GM18951 (cell line): ENCODE measurements at regions of chr2 and their contacts with region 1.

Region 1: GRCh38 chr2:26720322-26721166 is 28.0 kb downstream of the KCNK3 start:
- POLR2A ChIP-seq: no peak

Region 2: GRCh38 chr2:25936889-25937545 is 783.5 kb before region 1 on chr2:
- in situ Hi-C with region 1: loop called (anchors 25 kb)
- POLR2A ChIP-seq: no peak

Region 3: GRCh38 chr2:26316041-26316440 is 404.5 kb before region 1 on chr2:
- in situ Hi-C with region 1: no loop called
- POLR2A ChIP-seq: no peak

Region 4: DNA sequence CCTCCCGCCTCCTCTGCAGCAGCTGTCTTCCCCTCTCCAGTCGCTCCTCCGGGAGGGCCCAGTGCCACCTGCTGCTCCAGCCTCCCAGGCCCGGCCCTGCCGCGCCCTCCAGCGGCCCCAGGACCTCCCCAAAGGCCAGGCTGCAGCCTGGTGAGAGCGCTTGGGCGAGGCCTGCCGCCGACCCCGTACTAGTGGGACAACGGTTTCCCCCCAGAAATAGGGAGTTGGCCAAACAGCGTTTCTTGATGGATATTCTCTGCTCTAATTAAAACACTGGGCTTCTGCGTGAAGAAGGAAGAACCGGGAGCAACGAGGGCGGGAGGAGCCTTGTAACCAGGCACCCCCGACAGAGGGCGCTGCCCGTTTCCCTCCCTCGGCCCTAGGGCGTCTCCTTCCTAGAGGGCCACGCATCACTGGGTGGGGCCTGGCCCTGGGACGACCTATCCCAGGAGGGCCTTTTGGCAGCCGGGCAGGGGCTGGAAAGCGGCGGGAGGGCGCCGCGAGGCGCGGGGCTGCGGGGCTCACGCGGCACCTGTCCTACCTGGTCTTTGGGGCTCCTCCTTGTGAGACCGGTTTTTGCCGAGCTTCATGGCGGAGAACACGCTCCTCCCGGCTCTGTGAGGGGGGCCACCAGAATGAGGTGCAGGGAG is 217.2 kb before region 1 on chr2:
- in situ Hi-C with region 1: no loop called
- POLR2A ChIP-seq: no peak

Region 5: DNA sequence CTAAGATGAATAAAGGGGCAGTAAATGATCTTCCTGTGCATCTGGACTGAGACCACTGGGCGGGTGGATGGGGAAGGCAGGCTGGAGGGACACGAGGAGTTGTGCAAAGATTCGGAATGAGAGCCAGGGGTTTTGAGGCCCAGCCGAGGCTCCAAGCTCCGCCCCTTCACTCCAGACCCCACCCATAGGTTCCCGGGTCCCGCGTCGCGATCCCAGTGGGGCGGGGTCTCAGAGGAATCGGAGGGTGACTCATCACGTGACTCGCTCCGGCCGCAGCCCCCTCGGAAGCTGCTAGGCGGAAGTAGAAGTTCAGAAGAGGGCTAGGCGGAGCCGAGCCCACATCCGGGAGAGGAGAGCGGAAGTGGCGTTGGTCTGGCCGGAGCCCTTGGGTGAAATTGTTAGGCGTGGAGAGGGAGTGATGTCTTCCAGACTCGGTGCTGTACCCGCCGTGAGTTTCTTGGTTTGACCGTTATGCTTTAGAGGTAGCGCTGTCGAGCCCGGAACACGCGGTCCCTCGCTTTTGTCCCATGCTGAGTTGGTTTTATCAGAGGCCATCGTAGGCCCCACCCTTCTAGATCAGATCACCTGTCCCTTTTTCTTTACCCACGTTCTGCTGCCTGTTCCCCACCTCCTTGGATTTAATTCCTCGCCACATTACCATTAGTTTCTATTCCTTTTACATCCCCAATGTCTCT is 862.3 kb after region 1 on chr2 and contains the start of gene ZNF512:
- in situ Hi-C with region 1: no loop called
- POLR2A ChIP-seq: peak; percentile 81